ENCODE measurements at regions of chrX and their contacts with region 1.

Region 1: DNA sequence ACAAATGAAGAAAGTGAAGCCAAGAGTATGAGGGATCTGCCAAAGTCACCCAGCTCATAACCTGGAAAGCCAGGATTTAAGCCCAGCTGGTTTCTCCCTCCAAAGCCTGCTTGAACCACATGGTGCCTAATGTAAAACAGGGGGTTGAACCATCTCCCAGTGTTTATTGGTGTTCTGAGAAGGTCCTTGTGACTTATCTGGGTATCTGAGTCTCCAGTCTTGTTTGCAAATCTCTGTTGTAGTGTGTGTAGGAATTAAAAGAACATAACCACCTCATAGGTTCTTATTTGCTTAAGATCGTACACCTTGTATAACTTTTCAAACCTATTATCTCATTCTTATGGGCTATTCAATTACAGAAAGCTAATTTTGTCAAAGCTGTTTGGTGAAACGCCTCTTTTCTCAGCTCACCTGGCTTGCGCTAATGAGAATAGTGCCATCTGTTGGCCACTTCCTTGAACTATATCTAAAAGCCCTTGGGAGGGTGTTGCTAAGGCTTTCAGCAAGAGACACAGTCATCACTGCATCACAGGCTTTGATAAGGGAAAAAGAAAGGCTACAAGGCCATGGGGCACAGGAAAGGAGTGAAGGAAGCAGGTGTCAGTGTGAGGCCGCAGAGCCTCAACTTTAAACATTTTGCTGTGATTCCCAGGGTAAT is 34.0 kb downstream of the ETDB start:
- DNase-seq: peak in 7 of 9 donors; percentile 42 to 72 (median 62)
- ATAC-seq: peak; percentile 100
- H3K4me3 ChIP-seq: no peak overlapping the region
- H3K4me3 Mint-ChIP-seq: no peak overlapping the region
- H3K27ac ChIP-seq: no peak overlapping the region
- H3K27ac Mint-ChIP-seq: peak overlapping the region in 2 of 9 donors; percentile 11 to 22
- H3K4me1 ChIP-seq: no peaks in the 10 kb centered on the region
- H3K4me1 Mint-ChIP-seq: peaks cover 0 to 6% (median 5%) of the 10 kb centered on the region in 7 donors
- H3K27me3 ChIP-seq: no peaks in the 10 kb centered on the region
- H3K27me3 Mint-ChIP-seq: peaks cover 0 to 6% (median 0%) of the 10 kb centered on the region in 5 donors

Region 2: DNA sequence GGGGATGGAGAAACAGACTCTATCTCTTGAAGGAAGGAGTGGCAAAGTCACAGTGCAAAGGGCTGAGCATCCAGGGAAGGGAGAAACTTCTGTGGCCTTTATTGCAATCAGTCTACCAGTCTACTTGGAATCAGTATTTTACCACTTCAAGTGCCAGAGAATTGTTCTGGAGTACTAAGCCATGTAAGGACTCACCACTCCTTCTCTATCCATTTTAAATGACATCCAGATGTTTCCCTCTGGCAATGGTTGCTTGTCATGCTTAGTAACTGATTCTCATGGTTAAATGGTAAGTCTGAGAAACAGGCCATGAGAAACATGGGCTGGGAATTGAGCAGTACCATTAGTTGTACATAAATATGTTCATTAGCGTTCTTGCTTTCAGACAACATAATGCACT is 116.6 kb before region 1 on chrX:
- CTCF ChIA-PET with region 1: interaction called, 6 read pairs
- POLR2A ChIA-PET with region 1: interaction called, 3 read pairs
- intact Hi-C with region 1: loop called (anchors 1 kb)
- DNase-seq: no peak
- ATAC-seq: no peak
- H3K4me3 ChIP-seq: no peak overlapping the region
- H3K4me3 Mint-ChIP-seq: no peak overlapping the region
- H3K27ac ChIP-seq: no peak overlapping the region
- H3K27ac Mint-ChIP-seq: no peak overlapping the region
- H3K4me1 ChIP-seq: no peaks in the 10 kb centered on the region
- H3K4me1 Mint-ChIP-seq: peaks cover 0 to 1% (median 0%) of the 10 kb centered on the region in 7 donors
- H3K27me3 ChIP-seq: no peaks in the 10 kb centered on the region
- H3K27me3 Mint-ChIP-seq: no peaks in the 10 kb centered on the region

Region 3: GRCh38 chrX:135050603-135051002 is 35.7 kb before region 1 on chrX:
- CTCF ChIA-PET with region 1: no interaction called
- POLR2A ChIA-PET with region 1: interaction called, 3 read pairs
- intact Hi-C with region 1: loop called (anchors 1 to 2 kb)
- DNase-seq: no peak
- ATAC-seq: no peak
- H3K4me3 ChIP-seq: no peak overlapping the region
- H3K4me3 Mint-ChIP-seq: peak overlapping the region; percentile 69 to 95 (median 90)
- H3K27ac ChIP-seq: no peak overlapping the region
- H3K27ac Mint-ChIP-seq: peak overlapping the region in 8 of 9 donors; percentile 77 to 95 (median 86)
- H3K4me1 ChIP-seq: no peaks in the 10 kb centered on the region
- H3K4me1 Mint-ChIP-seq: peaks cover 12 to 26% (median 24%) of the 10 kb centered on the region in 7 donors
- H3K27me3 ChIP-seq: no peaks in the 10 kb centered on the region
- H3K27me3 Mint-ChIP-seq: no peaks in the 10 kb centered on the region

Region 4: DNA sequence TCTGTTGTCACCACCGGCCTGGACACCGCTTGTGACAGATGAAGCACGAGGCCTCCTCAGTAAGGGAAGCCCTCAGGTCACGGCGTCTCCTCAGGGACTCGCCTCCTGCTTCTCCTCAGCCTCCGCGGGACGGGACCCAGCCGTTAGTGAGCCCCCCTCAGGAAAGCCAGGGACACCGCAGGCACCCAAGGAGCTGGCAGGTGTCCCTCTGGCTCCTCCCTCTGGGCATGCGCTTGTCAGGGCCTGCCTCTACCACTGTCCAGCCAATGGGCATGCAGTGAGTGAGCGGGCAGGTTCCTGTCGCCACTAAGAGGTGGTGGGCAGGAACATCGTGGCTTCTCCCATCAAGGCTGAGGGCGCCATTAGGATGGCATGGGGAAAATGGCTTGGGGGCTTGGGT is 108.4 kb after region 1 on chrX:
- CTCF ChIA-PET with region 1: no interaction called
- POLR2A ChIA-PET with region 1: no interaction called
- intact Hi-C with region 1: no loop called
- DNase-seq: no peak
- ATAC-seq: no peak
- H3K4me3 ChIP-seq: no peak overlapping the region
- H3K4me3 Mint-ChIP-seq: no peak overlapping the region
- H3K27ac ChIP-seq: no peak overlapping the region
- H3K27ac Mint-ChIP-seq: no peak overlapping the region
- H3K4me1 ChIP-seq: no peaks in the 10 kb centered on the region
- H3K4me1 Mint-ChIP-seq: no peaks in the 10 kb centered on the region
- H3K27me3 ChIP-seq: no peaks in the 10 kb centered on the region
- H3K27me3 Mint-ChIP-seq: peaks cover 0 to 29% (median 4%) of the 10 kb centered on the region in 5 donors

Measured in naive thymus-derived CD4-positive, alpha-beta T cell (primary cell).